Activated CD4-positive, alpha-beta T cell treated with anti-CD3 and anti-CD28 coated beads, Interleukin-2, amount 10 ng/mL, durations not matched to agents 24 days and 14 days (primary cell): ENCODE measurements at regions of chr12 and their contacts with region 1.

Region 1: DNA sequence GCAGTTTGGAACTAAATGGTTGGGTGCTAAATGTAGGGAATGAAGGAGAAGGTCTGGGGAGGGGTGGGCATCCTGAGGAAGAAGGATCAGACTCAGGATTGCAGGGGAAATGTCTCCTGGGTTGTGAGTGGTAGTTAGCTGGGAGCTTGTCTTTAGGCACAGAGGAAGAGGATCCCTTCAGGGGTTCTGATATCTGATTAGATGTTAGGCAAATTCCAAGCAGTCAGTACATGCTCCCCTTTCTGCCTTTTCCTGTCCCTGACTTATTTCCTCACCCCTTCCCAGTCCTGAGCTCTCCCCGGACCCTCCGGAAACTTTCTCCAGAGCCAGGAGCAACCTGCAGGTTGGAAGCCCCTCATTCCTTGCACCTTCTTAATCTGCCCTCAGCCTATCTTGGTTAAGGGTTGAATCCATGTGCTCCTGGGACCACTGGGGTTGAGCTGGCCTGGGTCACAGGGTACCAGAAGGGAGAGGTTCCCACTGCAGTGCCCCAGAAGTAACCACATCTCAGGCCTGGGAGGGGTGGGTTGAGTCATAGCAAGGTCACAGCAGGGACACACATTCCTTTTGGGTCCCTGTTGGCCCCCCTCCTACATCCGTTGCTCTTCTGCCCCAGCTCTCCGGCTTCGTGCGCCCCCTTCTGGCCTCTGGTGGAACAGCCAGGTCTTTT is 1.6 kb downstream of the IGFBP6 start:
- DNase-seq: peak; percentile 96
- H3K4me3 Mint-ChIP-seq: peak overlapping the region; percentile 77
- H3K27ac Mint-ChIP-seq: peak overlapping the region; percentile 58
- H3K4me1 Mint-ChIP-seq: peaks cover 40% of the 10 kb centered on the region
- H3K27me3 Mint-ChIP-seq: peaks cover 23% of the 10 kb centered on the region

Region 2: GRCh38 chr12:52879394-52880351 is 219.4 kb before region 1 on chr12:
- intact Hi-C with region 1: no loop called
- DNase-seq: peak; percentile 93
- H3K4me3 Mint-ChIP-seq: peak overlapping the region; percentile 82
- H3K27ac Mint-ChIP-seq: no peak overlapping the region
- H3K4me1 Mint-ChIP-seq: peaks cover 8% of the 10 kb centered on the region
- H3K27me3 Mint-ChIP-seq: peaks cover 8% of the 10 kb centered on the region

Region 3: DNA sequence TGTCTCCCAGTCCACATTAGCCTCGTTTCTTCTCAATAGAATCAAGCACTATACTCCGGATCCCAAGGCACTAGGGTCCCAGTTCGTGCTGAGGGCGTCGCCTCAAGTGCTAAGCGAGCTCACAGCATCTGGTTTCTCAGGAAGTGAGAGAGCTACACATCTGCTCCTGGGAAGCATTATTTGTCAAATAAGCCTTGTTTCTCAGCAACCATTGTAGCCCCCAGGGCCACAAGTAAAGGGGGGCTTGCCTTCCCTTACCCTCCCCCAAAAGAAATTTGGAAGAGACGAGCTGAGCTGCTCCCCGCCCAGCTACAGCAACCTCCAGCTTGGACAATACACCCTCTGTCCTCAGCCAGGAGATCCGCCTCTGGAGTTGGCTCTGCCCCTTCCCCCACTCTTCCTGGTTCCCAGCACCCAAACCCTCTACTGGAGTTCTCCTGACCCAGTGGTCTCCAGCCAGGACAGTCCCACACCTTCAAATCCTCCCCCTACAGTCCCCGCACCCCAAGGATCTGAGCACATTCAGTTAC is 55.0 kb before region 1 on chr12:
- intact Hi-C with region 1: no loop called
- DNase-seq: no peak
- H3K4me3 Mint-ChIP-seq: no peak overlapping the region
- H3K27ac Mint-ChIP-seq: no peak overlapping the region
- H3K4me1 Mint-ChIP-seq: peaks cover 29% of the 10 kb centered on the region
- H3K27me3 Mint-ChIP-seq: no peaks in the 10 kb centered on the region

Region 4: DNA sequence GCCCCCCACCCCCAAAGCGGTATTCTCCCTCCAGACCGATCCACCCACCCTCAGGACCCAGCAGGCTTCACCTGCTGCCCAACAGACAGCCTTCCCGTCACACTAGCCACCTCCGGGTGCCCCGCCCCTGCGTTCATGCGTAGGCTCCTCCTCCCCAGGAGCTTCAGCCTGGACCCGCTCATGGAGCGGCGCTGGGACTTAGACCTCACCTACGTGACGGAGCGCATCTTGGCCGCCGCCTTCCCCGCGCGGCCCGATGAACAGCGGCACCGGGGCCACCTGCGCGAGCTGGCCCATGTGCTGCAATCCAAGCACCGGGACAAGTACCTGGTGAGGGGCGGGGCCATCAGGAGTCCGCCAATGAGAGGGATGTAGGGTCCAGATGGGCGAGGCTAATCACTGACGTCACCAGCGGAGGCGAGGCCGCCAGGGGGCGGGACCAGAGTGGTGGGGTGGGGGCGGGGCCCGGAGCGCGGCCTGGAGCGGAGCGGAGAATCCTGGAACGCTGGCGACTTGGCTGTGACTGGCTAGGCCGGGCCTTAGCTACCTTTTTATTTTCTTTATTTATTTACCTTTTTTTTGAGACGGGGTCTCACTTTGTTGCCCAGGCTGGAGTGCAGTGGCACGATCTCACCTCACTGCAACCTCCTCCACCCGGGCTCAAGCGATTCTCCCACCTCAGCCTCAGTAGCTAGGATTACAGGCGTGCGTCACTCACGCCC is 44.8 kb before region 1 on chr12:
- intact Hi-C with region 1: loop called (anchors 5 kb)
- DNase-seq: peak; percentile 97
- H3K4me3 Mint-ChIP-seq: peak overlapping the region; percentile 98
- H3K27ac Mint-ChIP-seq: peak overlapping the region; percentile 93
- H3K4me1 Mint-ChIP-seq: peaks cover 13% of the 10 kb centered on the region
- H3K27me3 Mint-ChIP-seq: peaks cover 4% of the 10 kb centered on the region

Region 5: GRCh38 chr12:53065975-53066931 is 32.9 kb before region 1 on chr12:
- intact Hi-C with region 1: loop called (anchors 1 kb)
- DNase-seq: peak; percentile 91
- H3K4me3 Mint-ChIP-seq: no peak overlapping the region
- H3K27ac Mint-ChIP-seq: peak overlapping the region; percentile 9
- H3K4me1 Mint-ChIP-seq: peaks cover 8% of the 10 kb centered on the region
- H3K27me3 Mint-ChIP-seq: no peaks in the 10 kb centered on the region

Region 6: GRCh38 chr12:54359033-54359761 is 1260.1 kb after region 1 on chr12:
- intact Hi-C with region 1: no loop called
- DNase-seq: peak; percentile 98
- H3K4me3 Mint-ChIP-seq: no peak overlapping the region
- H3K27ac Mint-ChIP-seq: no peak overlapping the region
- H3K4me1 Mint-ChIP-seq: peaks cover 28% of the 10 kb centered on the region
- H3K27me3 Mint-ChIP-seq: no peaks in the 10 kb centered on the region